ENCODE measurements at regions of chr22 and their contacts with region 1.

Region 1: DNA sequence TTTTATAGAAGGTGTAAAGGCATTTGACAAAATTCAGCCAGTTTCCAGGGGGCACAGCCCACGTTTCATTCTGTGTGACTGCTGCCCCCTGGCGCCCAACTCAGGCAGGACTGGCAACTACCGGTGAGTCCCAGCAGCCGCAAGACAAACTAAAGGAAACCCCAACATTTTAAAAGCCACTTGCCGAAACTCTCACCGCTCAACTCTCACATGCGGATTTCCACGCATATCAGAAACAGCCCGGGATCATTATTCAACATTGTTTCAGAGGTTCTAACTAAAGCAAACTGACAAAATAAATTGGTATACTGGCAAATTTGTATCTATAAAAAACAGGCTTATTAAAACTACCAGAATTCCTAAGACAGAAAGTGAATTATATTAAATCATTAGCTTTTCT is 48.2 kb downstream of the MORC2 start:
- DNase-seq: peak; percentile 72
- H3K4me3 Mint-ChIP-seq: no peak overlapping the region
- H3K27ac Mint-ChIP-seq: no peak overlapping the region
- H3K4me1 Mint-ChIP-seq: no peaks in the 10 kb centered on the region
- H3K27me3 Mint-ChIP-seq: no peaks in the 10 kb centered on the region
- CTCF ChIP-seq: peak; percentile 86

Region 2: GRCh38 chr22:30634471-30635233 is 285.8 kb before region 1 on chr22:
- CTCF ChIA-PET with region 1: interaction called, 11 read pairs
- POLR2A ChIA-PET with region 1: no interaction called
- intact Hi-C with region 1: loop called (anchors 2 kb)
- DNase-seq: peak; percentile 90
- H3K4me3 Mint-ChIP-seq: peak overlapping the region; percentile 70
- H3K27ac Mint-ChIP-seq: no peak overlapping the region
- H3K4me1 Mint-ChIP-seq: no peaks in the 10 kb centered on the region
- H3K27me3 Mint-ChIP-seq: no peaks in the 10 kb centered on the region
- CTCF ChIP-seq: peak; percentile 93

Region 3: GRCh38 chr22:30773919-30774318 is 146.5 kb before region 1 on chr22:
- CTCF ChIA-PET with region 1: interaction called, 30 read pairs
- POLR2A ChIA-PET with region 1: interaction called, 3 read pairs
- intact Hi-C with region 1: no loop called
- DNase-seq: no peak
- H3K4me3 Mint-ChIP-seq: no peak overlapping the region
- H3K27ac Mint-ChIP-seq: no peak overlapping the region
- H3K4me1 Mint-ChIP-seq: no peaks in the 10 kb centered on the region
- H3K27me3 Mint-ChIP-seq: no peaks in the 10 kb centered on the region
- CTCF ChIP-seq: no peak

Region 4: DNA sequence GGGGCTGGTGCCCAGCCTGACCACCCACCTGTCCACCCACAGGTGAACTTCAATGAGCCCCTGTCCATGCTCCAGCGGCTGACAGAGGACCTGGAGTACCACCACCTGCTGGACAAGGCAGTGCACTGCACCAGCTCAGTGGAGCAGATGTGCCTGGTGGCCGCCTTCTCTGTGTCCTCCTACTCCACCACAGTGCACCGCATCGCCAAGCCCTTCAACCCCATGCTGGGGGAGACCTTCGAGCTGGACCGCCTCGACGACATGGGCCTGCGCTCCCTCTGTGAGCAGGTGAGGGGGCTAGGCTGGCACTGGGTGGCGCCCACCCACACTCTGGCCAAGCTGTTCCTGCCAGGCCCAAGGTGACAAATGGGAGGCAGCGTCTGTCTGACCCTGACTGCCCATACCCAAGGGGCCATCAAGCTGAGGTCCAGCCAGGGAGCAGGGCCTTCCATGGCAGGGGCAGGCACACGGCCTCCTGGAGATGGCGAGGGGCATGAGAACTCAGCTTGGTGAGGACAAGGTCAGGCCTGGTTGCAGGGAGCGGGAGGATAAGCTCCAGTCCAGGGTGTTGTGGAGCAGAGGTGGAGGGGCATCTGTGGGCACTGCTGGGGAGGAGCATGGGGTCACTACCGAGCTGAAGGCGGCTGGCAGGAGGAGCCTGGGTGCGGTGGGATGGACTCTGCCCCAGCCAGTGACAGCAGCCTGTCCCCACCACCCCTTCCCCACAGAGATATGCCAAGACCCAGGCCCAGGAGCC is 29.5 kb before region 1 on chr22:
- CTCF ChIA-PET with region 1: interaction called, 13 read pairs
- POLR2A ChIA-PET with region 1: no interaction called
- intact Hi-C with region 1: no loop called
- DNase-seq: peak; percentile 57
- H3K4me3 Mint-ChIP-seq: no peak overlapping the region
- H3K27ac Mint-ChIP-seq: no peak overlapping the region
- H3K4me1 Mint-ChIP-seq: no peaks in the 10 kb centered on the region
- H3K27me3 Mint-ChIP-seq: no peaks in the 10 kb centered on the region
- CTCF ChIP-seq: peak; percentile 76

Region 5: DNA sequence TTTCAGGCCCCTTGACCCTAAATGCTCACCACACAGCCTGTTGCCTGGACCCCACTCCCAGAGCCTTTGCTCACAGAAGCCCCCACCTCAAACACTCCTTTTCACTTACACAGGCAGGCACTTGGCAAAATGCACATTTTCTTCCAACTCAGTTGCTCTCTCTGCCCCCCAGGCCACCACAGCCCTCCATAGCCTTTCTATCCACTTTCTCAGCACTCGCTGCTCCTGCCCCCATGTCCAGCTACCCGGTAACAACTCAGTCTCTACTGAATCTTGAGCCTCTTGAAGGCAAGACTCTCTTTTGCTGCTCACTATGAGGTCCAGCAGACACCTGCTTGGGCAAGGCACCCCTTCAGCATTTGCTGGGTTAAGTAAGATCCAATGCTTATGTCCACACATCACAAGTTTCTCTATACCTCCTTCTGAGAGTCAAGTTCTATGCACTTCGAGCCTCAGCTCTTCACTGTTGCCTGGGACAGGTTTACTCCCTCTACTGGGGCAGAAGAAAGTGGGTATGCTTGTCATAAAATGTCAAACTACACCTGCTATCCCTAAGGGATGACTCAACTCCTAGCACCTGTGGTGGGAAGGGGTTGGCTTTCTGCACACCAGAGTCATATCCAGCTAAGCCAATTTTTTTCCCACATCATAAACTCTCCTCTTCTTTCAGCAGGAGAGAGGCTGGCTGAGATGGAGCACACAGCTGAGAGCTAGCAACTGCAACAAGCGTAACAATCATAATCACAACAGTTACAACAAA is 11.3 kb after region 1 on chr22:
- CTCF ChIA-PET with region 1: interaction called, 12 read pairs
- POLR2A ChIA-PET with region 1: interaction called, 6 read pairs
- intact Hi-C with region 1: no loop called
- DNase-seq: no peak
- H3K4me3 Mint-ChIP-seq: no peak overlapping the region
- H3K27ac Mint-ChIP-seq: no peak overlapping the region
- H3K4me1 Mint-ChIP-seq: no peaks in the 10 kb centered on the region
- H3K27me3 Mint-ChIP-seq: no peaks in the 10 kb centered on the region
- CTCF ChIP-seq: no peak

Region 6: GRCh38 chr22:30998329-30998728 is 77.9 kb after region 1 on chr22:
- CTCF ChIA-PET with region 1: no interaction called
- POLR2A ChIA-PET with region 1: no interaction called
- intact Hi-C with region 1: no loop called
- DNase-seq: no peak
- H3K4me3 Mint-ChIP-seq: no peak overlapping the region
- H3K27ac Mint-ChIP-seq: no peak overlapping the region
- H3K4me1 Mint-ChIP-seq: no peaks in the 10 kb centered on the region
- H3K27me3 Mint-ChIP-seq: no peaks in the 10 kb centered on the region
- CTCF ChIP-seq: no peak

Region 7: DNA sequence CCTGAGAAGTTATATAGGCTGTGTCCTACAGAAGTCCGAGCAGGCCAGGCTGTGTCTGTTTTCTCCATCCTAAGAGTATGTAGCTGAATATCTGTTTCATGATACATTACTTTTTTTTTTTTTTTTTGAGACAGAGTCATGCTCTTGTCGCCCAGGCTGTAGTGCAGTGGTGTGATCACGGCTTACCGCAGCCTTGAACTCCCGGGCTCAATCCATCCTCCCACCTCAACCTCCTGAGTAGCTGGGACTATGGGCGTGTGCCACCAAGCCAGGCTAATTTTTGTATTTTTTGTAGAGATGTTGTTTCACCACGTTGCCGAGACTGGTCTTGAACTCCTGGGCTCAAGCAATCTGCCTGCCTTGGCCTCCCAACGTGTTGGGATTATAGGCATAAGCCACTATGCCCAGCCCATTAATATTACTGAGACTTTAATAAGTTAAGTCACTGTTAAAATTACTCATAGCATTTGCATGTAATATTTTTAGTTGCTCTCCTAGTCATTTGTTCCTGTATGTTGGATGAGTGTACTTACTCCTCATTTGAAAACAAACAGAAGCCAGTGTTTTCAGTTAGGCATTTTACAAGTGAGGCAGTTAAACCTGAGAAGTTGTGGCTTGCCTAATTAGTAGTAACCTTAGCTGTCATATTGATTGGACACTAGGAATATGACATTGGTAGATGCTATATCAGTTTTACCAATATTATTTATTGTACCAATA is 505.1 kb after region 1 on chr22:
- CTCF ChIA-PET with region 1: no interaction called
- POLR2A ChIA-PET with region 1: no interaction called
- intact Hi-C with region 1: no loop called
- DNase-seq: no peak
- H3K4me3 Mint-ChIP-seq: no peak overlapping the region
- H3K27ac Mint-ChIP-seq: peak overlapping the region; percentile 19
- H3K4me1 Mint-ChIP-seq: no peaks in the 10 kb centered on the region
- H3K27me3 Mint-ChIP-seq: no peaks in the 10 kb centered on the region
- CTCF ChIP-seq: no peak